CD8-positive, alpha-beta T cell (primary cell): ENCODE measurements at regions of chr5 and their contacts with region 1.

Region 1: GRCh38 chr5:54761213-54761701 is 224.1 kb downstream of the ESM1 start:
- DNase-seq: no peak
- ATAC-seq: no peak
- H3K4me3 ChIP-seq: no peak overlapping the region
- H3K4me3 Mint-ChIP-seq: no peak overlapping the region
- H3K27ac ChIP-seq: no peak overlapping the region
- H3K27ac Mint-ChIP-seq: no peak overlapping the region
- H3K4me1 ChIP-seq: peaks cover 7% of the 10 kb centered on the region
- H3K4me1 Mint-ChIP-seq: peaks cover 11% of the 10 kb centered on the region
- H3K27me3 ChIP-seq: no peaks in the 10 kb centered on the region
- H3K27me3 Mint-ChIP-seq: no peaks in the 10 kb centered on the region
- CTCF ChIP-seq: no peak

Region 2: DNA sequence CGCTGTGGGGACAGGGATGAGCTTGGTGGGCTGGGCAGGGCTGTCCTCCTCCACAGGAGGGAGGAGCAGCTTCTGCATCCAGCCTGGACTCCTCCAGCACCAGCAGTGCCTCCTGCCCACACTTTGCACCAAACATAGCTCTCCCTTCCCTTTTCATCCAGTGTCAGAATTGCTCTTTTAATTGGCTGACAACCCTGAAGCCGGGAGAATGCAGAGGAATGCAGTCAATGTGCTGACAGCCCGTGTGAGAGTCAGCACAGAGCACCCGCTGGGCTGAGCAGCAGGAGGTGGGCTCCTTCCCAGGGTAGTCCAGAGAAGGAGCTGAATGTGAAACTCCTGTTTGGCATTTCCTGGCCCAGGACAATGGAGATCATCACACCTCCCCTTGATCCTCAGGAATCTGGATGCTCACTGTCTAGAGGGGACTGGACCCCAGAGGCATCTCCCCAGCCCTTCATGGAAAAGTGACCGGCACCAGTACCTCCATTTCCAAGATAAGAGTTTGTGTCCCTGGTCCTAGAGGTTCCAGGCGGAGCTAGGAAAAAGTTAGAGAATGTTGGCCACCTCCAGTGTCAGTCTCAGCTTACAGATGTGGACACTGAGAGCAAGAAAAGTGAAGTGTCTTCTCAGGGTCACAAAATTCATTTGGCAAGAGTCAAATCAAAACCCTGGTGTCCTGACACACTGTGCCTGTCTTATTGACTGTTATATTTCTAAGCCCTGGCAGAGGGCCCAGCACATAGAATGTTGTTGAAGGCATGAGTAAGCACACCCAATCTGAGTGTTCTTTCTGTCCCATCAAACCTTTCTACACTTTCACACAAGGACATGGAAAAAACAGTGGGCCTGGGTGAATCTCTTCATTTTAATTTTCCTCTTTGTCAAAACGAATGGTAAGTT is 41.6 kb before region 1 on chr5:
- CTCF ChIA-PET with region 1: no interaction called
- POLR2A ChIA-PET with region 1: no interaction called
- intact Hi-C with region 1: loop called in 1 of 2 experiments (anchors 10 kb)
- DNase-seq: no peak
- ATAC-seq: no peak
- H3K4me3 ChIP-seq: no peak overlapping the region
- H3K4me3 Mint-ChIP-seq: no peak overlapping the region
- H3K27ac ChIP-seq: no peak overlapping the region
- H3K27ac Mint-ChIP-seq: no peak overlapping the region
- H3K4me1 ChIP-seq: no peaks in the 10 kb centered on the region
- H3K4me1 Mint-ChIP-seq: peaks cover 11% of the 10 kb centered on the region
- H3K27me3 ChIP-seq: no peaks in the 10 kb centered on the region
- H3K27me3 Mint-ChIP-seq: peaks cover under 1% of the 10 kb centered on the region
- CTCF ChIP-seq: no peak